ENCODE measurements at regions of chr9 and their contacts with region 1.

Region 1: DNA sequence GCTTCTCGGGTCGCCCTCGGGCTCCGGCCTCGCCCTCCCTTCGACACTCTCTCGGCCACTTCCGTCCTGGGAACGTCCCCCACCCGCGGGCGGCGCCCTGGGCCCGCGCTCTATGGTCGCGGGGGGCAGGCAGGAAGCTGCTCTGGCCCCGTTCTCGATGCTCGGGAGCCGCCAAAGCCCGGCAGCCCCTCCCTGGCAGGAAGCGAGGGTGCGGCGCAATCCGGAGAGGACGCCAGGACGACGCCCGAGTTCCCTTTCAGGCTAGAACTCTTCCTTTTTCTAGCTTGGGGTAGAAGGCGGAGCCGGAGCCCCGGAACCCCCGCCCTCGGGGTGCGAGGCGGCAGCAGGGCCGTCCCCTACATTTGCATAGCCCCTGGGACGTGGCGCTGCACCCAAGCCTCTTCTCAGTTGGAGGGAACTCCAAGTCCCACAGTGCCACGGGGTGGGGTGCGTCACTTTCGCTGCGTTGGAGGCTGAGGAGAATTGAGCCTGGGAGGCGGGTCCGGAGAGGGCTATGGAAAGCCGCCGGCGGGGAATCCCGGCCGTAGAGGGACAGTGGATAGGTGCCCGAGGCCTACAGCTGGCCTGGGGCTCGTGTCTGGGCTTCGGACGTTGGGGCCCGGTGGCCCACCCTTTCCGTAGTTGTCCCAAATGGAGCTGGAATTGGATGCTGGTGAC is at the starts of genes CREB3 and TLN1:
- DNase-seq: peak; percentile 99
- H3K4me3 Mint-ChIP-seq: no peak within 1 kb of the TSS
- H3K27ac Mint-ChIP-seq: peak within 1 kb of the TSS; percentile 89
- H3K4me1 Mint-ChIP-seq: peaks cover 23% of the 10 kb centered on the region
- H3K27me3 Mint-ChIP-seq: no peaks in the 10 kb centered on the region
- total RNA-seq, gene CREB3: 23.2 to 24.1 TPM
- total RNA-seq, gene TLN1: 341 to 354 TPM

Region 2: GRCh38 chr9:35657546-35658136 is 74.6 kb before region 1 on chr9 and contains the start of gene RMRP:
- CTCF ChIA-PET with region 1: interaction called, 95 read pairs
- POLR2A ChIA-PET with region 1: interaction called, 147 read pairs
- DNase-seq: peak; percentile 89
- H3K4me3 Mint-ChIP-seq: peak within 1 kb of the TSS; percentile 93
- H3K27ac Mint-ChIP-seq: peak within 1 kb of the TSS; percentile 94
- H3K4me1 Mint-ChIP-seq: peaks cover 62% of the 10 kb centered on the region
- H3K27me3 Mint-ChIP-seq: peaks cover 4% of the 10 kb centered on the region
- total RNA-seq, gene RMRP: 9,885 to 10,678 TPM

Region 3: GRCh38 chr9:35705836-35706430 is 26.3 kb before region 1 on chr9:
- CTCF ChIA-PET with region 1: no interaction called
- POLR2A ChIA-PET with region 1: interaction called, 10 read pairs
- DNase-seq: no peak
- H3K4me3 Mint-ChIP-seq: no peak overlapping the region
- H3K27ac Mint-ChIP-seq: no peak overlapping the region
- H3K4me1 Mint-ChIP-seq: no peaks in the 10 kb centered on the region
- H3K27me3 Mint-ChIP-seq: no peaks in the 10 kb centered on the region

Region 4: DNA sequence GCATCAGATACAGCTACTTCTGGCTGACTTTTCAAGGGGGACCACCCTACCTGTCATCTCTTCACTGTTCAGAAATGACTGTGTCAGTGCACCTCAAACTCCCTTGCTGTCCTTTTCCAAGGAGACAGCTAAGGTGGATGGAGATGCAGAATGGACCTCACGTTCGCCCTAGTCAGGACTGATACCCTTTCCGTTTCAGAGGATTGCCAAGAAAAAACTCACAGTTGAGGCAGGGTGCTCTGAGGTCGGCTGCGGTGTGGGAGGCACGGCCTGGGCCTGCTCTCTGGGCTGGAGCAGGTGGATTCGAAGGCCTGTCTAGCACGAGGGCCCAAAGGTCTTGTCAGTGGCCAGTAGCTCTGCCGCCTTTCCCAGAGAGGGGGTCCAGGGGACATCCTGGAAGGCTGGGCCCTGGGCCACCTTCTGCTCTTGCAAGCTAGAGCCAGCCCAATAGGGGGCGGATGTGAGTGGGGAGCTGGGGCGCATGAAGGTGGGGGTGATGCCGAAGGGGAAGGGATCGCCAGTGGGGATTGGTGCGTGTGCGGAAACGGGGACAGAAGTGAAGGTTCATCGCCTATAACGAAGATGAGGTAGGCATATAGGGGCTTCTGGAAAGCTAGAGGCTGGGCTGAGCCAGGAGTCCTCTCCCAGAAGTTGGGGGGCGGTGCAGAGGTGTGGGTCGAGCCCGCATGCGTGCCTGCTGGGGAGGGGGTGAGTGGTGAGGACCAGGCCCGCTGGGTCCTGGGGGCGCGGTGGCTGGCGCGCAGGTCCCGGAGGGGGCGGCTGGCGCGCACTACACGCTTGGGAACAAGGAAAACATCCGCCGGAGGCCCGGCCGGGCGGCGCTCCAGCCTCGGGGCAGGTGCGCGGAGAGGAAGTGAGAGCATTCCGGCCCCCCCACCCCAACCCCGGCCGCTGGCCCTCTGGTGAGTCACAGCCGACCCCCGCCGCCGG is 24.3 kb after region 1 on chr9:
- CTCF ChIA-PET with region 1: interaction called, 12 read pairs
- POLR2A ChIA-PET with region 1: interaction called, 11 read pairs
- DNase-seq: peak; percentile 84
- H3K4me3 Mint-ChIP-seq: peak overlapping the region; percentile 90
- H3K27ac Mint-ChIP-seq: peak overlapping the region; percentile 90
- H3K4me1 Mint-ChIP-seq: peaks cover 42% of the 10 kb centered on the region
- H3K27me3 Mint-ChIP-seq: no peaks in the 10 kb centered on the region

Measured in activated CD4-positive, alpha-beta memory T cell treated with anti-CD3 and anti-CD28 coated beads, Interleukin-2, amount 10 ng/mL, durations not matched to agents 7 days and 5 days (primary cell).